ENCODE measurements at regions of chr14 and their contacts with region 1.

Region 1: GRCh38 chr14:24241829-24242443 is 487 bp downstream of the TINF2 start:
- DNase-seq: peak; percentile 92 to 96 (median 95)
- ATAC-seq: peak; percentile 89 to 95 (median 94)
- H3K4me3 ChIP-seq: peak overlapping the region; percentile 42 to 94 (median 72)
- H3K27ac ChIP-seq: peak overlapping the region; percentile 92 to 100 (median 98)
- H3K4me1 ChIP-seq: peaks cover 16 to 59% (median 42%) of the 10 kb centered on the region in 12 donors
- H3K27me3 ChIP-seq: no peaks in the 10 kb centered on the region
- CTCF ChIP-seq: peak; percentile 52 to 75 (median 64)
- POLR2A ChIP-seq: no peak

Region 2: DNA sequence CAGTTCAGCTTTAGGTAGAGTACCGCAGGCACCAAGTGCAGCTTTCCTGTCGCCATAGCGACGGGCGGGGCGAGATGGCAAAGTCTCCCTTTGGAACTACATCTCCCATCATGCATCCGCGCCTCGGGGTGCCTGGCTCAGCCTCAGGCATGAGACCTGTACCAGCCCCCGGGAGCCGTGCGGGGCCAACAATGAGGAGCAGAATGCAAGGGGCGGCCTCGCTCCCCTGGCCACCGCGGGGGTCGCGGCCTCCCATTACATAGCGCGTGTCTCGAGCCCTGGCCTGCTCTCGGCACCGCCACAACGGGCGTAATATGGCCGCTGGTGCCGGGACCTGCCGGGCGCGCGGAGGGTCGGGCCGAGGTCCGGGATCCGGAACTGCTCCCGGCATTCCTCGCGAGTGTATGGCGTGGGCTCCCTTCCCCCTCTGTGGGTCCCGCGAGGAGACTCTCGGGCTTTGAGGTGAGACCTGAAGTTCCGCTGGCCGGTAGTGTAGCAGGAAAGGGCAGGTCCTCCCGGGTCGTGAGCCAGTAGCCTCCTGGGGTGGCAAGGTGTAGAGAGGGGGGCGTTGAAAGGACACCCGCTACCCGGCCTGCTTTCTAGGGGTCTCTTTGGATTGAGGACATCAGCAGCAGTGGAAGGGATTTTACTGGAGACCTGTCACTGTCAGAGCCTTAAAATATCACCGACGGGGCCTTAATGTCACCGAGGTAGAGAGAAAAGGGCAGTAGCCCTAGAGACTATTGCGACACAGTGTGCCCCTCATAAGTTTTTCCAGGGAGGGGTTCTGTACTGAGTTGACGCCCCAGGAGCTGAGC is 685.8 kb before region 1 on chr14 and contains the start of gene THTPA:
- intact Hi-C with region 1: no loop called
- DNase-seq: peak; percentile 93 to 97 (median 95)
- ATAC-seq: peak; percentile 86 to 96 (median 94)
- H3K4me3 ChIP-seq: peak within 1 kb of the TSS; percentile 56 to 100 (median 92)
- H3K27ac ChIP-seq: peak within 1 kb of the TSS; percentile 90 to 100 (median 97)
- H3K4me1 ChIP-seq: peaks cover 0 to 35% (median 21%) of the 10 kb centered on the region in 12 donors
- H3K27me3 ChIP-seq: no peaks in the 10 kb centered on the region
- CTCF ChIP-seq: no peak
- POLR2A ChIP-seq: peak in 1 of 2 donors; percentile 52
- total RNA-seq, gene THTPA: 13.0 to 30.9 (median 18.9) TPM

Region 3: GRCh38 chr14:24212924-24213865 is 28.7 kb before region 1 on chr14 and contains the start of gene CHMP4A:
- intact Hi-C with region 1: loop called in 1 of 10 experiments (anchors 1 kb)
- DNase-seq: peak; percentile 97 to 99 (median 97)
- ATAC-seq: peak; percentile 91 to 95 (median 93)
- H3K4me3 ChIP-seq: peak within 1 kb of the TSS; percentile 67 to 98 (median 85)
- H3K27ac ChIP-seq: peak within 1 kb of the TSS; percentile 92 to 100 (median 96)
- H3K4me1 ChIP-seq: peaks cover 3 to 39% (median 21%) of the 10 kb centered on the region in 12 donors
- H3K27me3 ChIP-seq: no peaks in the 10 kb centered on the region
- CTCF ChIP-seq: peak in 6 of 12 donors; percentile 9 to 48 (median 28)
- POLR2A ChIP-seq: peak in 1 of 2 donors; percentile 90
- total RNA-seq, gene CHMP4A: 20.2 to 42.3 (median 34.5) TPM

Region 4: DNA sequence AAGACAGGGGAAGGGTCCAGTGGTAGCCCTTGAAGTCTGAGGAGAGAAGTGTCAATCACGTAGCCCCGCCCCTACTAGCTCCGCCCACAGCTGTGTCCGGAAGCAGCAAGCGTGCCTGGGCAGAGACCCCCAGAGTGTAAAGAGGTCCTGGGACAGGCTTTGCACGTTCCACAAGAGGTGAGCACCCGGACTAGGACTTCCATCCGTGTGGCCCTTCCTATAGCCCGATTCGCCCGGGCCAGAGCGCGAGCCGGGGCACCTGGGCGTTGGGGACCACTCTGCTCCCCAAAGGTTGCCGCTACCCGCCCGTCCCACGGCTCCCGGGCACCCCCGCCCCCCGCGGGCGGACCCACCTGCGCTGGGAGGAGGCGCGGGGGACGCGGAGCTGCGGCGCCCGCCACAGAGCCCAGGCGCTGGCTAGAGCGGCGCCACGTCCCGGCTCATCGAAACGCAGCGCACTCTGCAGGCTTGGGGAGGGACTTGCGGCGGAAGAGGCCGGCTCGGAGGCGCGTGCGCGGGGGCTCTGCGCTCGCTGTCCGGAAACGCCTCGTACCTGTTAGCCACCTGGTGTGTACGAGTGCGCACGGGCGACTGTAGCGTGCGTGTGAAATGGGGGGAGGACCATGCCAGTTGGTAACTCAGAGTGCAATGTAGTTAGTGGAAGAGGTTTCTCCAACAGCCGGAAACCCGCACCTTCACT is 29.3 kb after region 1 on chr14 and contains the start of gene RABGGTA:
- intact Hi-C with region 1: loop called in 2 of 10 experiments (anchors 1 to 2 kb)
- DNase-seq: peak; percentile 89 to 94 (median 90)
- ATAC-seq: peak; percentile 91 to 96 (median 95)
- H3K4me3 ChIP-seq: peak within 1 kb of the TSS; percentile 67 to 98 (median 86)
- H3K27ac ChIP-seq: peak within 1 kb of the TSS; percentile 88 to 99 (median 98)
- H3K4me1 ChIP-seq: peaks cover 0 to 47% (median 12%) of the 10 kb centered on the region in 12 donors
- H3K27me3 ChIP-seq: no peaks in the 10 kb centered on the region
- CTCF ChIP-seq: peak; percentile 60 to 95 (median 78)
- POLR2A ChIP-seq: peak in 1 of 2 donors; percentile 71
- total RNA-seq, gene RABGGTA: 18.8 to 33.1 (median 26.7) TPM

Region 5: DNA sequence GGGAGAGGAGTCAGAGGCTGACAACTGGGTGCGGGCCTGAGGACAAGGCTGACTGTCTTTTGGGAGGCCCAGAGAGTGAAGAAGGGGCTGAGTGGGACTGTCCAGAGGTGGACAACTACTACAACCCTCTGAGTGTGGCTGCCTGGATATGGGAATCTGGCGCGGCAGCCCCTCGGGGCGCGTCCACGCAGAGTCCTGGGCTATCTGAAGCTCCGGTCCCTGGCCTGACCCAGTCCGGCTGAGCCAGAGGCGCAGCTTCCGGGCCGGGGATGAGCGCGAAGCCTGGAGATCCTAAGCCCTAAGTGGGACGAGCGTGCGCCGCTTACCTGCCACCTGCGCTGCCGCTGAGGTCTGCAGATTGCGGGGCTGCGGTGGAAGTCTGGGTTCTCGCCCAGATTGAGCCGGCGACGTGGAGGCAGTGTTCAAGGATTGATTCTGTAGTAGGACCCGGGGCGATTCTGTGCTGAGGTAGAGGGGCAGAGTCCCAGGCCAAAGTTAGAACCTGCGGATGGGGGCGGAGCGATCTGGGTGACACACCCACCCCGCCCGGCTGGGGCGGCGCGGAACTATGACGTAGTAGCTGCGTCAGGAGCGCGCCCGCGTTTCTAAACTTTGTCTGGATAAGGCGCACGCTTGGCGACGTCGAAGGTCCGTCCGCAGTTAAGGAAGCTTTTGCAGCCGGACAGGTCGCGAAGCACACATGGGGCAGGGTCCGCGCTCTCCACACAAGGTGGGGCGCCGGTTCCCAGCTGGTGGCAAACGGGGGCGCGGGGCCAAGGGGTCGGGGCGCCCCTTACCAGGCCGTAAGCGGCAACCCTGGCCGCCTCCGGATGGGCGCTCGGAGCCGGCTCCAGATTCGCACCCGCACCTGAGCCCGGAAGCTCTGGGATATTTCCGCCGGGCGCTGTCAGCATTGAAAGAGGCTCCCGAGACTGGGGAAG is 57.6 kb after region 1 on chr14 and contains the starts of genes DHRS1 and NOP9:
- intact Hi-C with region 1: loop called (anchors 1 to 2 kb)
- DNase-seq: peak; percentile 90 to 96 (median 92)
- ATAC-seq: peak; percentile 83 to 94 (median 92)
- H3K4me3 ChIP-seq: peak within 1 kb of the TSS; percentile 75 to 99 (median 95)
- H3K27ac ChIP-seq: peak within 1 kb of the TSS; percentile 1 to 91 (median 80)
- H3K4me1 ChIP-seq: peaks cover 0 to 40% (median 24%) of the 10 kb centered on the region in 12 donors
- H3K27me3 ChIP-seq: no peaks in the 10 kb centered on the region
- CTCF ChIP-seq: no peak
- POLR2A ChIP-seq: peak in 1 of 2 donors; percentile 55
- total RNA-seq, gene DHRS1: 6.3 to 18.1 (median 11.3) TPM
- total RNA-seq, gene NOP9: 22.1 to 34.0 (median 27.8) TPM

Region 6: GRCh38 chr14:24481622-24482324 is 239.8 kb after region 1 on chr14:
- intact Hi-C with region 1: no loop called
- DNase-seq: peak in 1 of 5 donors; percentile 29
- ATAC-seq: peak in 2 of 4 donors; percentile 61 to 80
- H3K4me3 ChIP-seq: no peak overlapping the region
- H3K27ac ChIP-seq: no peak overlapping the region
- H3K4me1 ChIP-seq: no peaks in the 10 kb centered on the region
- H3K27me3 ChIP-seq: no peaks in the 10 kb centered on the region
- CTCF ChIP-seq: peak in 11 of 12 donors; percentile 36 to 60 (median 46)
- POLR2A ChIP-seq: no peak

Measured in heart left ventricle (tissue), 16 donors.